B cell (primary cell): ENCODE measurements at regions of chr2 and their contacts with region 1.

Region 1: GRCh38 chr2:33599175-33599942 is at the start of gene FAM98A:
- DNase-seq: peak; percentile 99
- ATAC-seq: peak; percentile 94
- H3K4me3 ChIP-seq: peak within 1 kb of the TSS; percentile 78 to 99 (median 90)
- H3K4me3 Mint-ChIP-seq: peak within 1 kb of the TSS; percentile 97
- H3K27ac ChIP-seq: peak within 1 kb of the TSS; percentile 88 to 90
- H3K27ac Mint-ChIP-seq: peak within 1 kb of the TSS; percentile 94
- H3K4me1 ChIP-seq: peaks cover 16% of the 10 kb centered on the region in 2 donors
- H3K4me1 Mint-ChIP-seq: peaks cover 31% of the 10 kb centered on the region
- H3K27me3 ChIP-seq: no peaks in the 10 kb centered on the region
- H3K27me3 Mint-ChIP-seq: no peaks in the 10 kb centered on the region
- CTCF ChIP-seq: no peak
- total RNA-seq, gene FAM98A: 29.4 and 32.1 TPM in 2 replicates

Region 2: DNA sequence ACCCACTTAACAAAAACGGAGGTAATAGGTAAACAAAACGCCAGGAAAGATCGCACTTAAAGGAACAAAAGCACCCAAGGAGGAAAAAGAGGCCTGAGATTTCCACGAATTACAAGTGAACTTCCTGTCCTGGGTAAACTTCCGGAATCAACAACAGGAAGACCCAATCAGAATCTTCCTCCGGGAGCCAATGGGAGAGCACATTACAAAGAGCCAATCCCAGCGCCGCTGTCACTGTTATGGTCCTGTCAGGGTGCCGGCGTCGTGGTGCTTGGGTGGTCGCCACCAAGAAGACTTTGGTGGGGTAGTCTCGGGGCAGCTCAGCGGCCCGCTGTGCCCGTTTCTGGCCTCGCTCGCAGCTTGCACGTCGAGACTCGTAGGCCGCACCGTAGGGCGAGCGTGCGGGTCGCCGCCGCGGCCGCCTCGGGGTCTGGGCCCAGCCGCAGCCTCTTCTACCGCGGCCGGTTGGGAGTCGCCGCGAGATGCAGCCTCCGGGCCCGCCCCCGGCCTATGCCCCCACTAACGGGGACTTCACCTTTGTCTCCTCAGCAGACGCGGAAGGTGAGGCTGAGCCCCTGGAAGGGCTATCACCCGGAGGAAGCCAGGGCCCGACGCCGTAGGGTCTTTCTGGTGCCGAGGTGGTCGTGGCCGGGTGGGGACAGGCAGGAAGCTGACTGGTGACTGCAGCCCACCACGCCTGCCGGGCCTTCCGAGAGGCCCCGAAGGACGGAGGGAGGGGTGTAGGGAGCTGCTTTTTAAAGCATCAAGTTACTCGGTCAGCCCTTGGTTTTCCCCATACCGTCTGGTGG is 1321.5 kb before region 1 on chr2 and contains the start of gene YIPF4:
- CTCF ChIA-PET with region 1: no interaction called
- POLR2A ChIA-PET with region 1: no interaction called
- intact Hi-C with region 1: loop called (anchors 10 kb)
- DNase-seq: peak; percentile 96
- ATAC-seq: peak; percentile 98
- H3K4me3 ChIP-seq: peak within 1 kb of the TSS; percentile 70 to 98 (median 94)
- H3K4me3 Mint-ChIP-seq: peak within 1 kb of the TSS; percentile 91
- H3K27ac ChIP-seq: peak within 1 kb of the TSS; percentile 66 to 95
- H3K27ac Mint-ChIP-seq: peak within 1 kb of the TSS; percentile 97
- H3K4me1 ChIP-seq: peaks cover 12 to 20% of the 10 kb centered on the region in 2 donors
- H3K4me1 Mint-ChIP-seq: peaks cover 23% of the 10 kb centered on the region
- H3K27me3 ChIP-seq: no peaks in the 10 kb centered on the region
- H3K27me3 Mint-ChIP-seq: peaks cover 12% of the 10 kb centered on the region
- CTCF ChIP-seq: no peak
- total RNA-seq, gene YIPF4: 38.0 and 42.4 TPM in 2 replicates

Region 3: DNA sequence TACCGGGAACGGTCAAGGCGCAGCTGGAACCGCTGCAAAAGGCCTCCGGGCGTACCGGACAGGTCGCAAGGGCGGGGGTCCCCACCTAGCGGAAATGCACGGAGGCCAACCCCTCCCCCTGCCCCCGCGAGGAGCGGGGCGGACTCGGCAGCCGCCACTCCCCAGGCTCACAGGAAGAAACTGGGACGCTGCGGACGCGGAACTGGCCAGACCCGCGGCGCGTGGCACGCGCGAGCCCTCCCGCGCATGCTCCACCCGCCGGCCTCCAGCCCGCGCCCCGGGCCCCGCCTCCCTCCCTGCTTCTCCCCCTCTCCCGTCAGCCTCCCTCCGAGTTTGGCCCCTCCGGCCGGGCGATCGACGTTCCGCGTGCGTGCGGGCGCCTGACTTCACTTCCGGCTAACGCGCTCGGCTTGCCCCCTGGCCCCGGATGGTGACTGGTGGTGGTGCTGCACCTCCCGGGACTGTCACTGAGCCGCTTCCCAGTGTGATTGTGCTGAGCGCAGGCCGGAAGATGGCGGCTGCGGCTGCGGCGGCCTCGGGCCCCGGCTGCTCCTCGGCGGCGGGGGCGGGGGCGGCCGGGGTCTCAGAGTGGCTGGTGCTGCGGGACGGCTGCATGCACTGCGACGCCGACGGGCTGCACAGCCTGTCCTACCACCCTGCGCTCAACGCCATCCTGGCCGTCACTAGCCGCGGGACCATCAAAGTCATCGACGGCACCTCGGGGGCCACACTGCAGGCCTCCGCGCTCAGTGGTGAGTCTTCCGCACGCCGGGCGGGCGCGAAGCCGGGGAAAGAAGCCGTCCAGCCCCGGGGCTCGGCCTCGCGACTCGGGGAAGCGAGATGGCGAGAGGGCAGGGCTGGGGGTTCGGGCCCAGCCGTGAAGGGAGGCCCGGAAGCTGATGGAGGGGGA is 1242.4 kb before region 1 on chr2 and contains the start of gene BIRC6:
- CTCF ChIA-PET with region 1: no interaction called
- POLR2A ChIA-PET with region 1: no interaction called
- intact Hi-C with region 1: loop called (anchors 2 kb)
- DNase-seq: peak; percentile 97
- ATAC-seq: peak; percentile 86
- H3K4me3 ChIP-seq: peak within 1 kb of the TSS; percentile 63 to 98 (median 97)
- H3K4me3 Mint-ChIP-seq: peak within 1 kb of the TSS; percentile 91
- H3K27ac ChIP-seq: peak within 1 kb of the TSS; percentile 91 to 92
- H3K27ac Mint-ChIP-seq: peak within 1 kb of the TSS; percentile 98
- H3K4me1 ChIP-seq: peaks cover 34 to 36% of the 10 kb centered on the region in 2 donors
- H3K4me1 Mint-ChIP-seq: peaks cover 40% of the 10 kb centered on the region
- H3K27me3 ChIP-seq: no peaks in the 10 kb centered on the region
- H3K27me3 Mint-ChIP-seq: no peaks in the 10 kb centered on the region
- CTCF ChIP-seq: no peak
- total RNA-seq, gene BIRC6: 166 and 196 TPM in 2 replicates

Region 4: GRCh38 chr2:32627814-32628579 is 971.4 kb before region 1 on chr2 and contains the start of gene TTC27:
- CTCF ChIA-PET with region 1: no interaction called
- POLR2A ChIA-PET with region 1: no interaction called
- intact Hi-C with region 1: loop called (anchors 1 kb)
- DNase-seq: peak; percentile 94
- ATAC-seq: peak; percentile 100
- H3K4me3 ChIP-seq: peak within 1 kb of the TSS; percentile 75 to 97 (median 80)
- H3K4me3 Mint-ChIP-seq: peak within 1 kb of the TSS; percentile 96
- H3K27ac ChIP-seq: peak within 1 kb of the TSS; percentile 39 to 66
- H3K27ac Mint-ChIP-seq: peak within 1 kb of the TSS; percentile 82
- H3K4me1 ChIP-seq: peaks cover 4 to 17% of the 10 kb centered on the region in 2 donors
- H3K4me1 Mint-ChIP-seq: peaks cover 18% of the 10 kb centered on the region
- H3K27me3 ChIP-seq: no peaks in the 10 kb centered on the region
- H3K27me3 Mint-ChIP-seq: no peaks in the 10 kb centered on the region
- CTCF ChIP-seq: no peak
- total RNA-seq, gene TTC27: 25.8 and 28.5 TPM in 2 replicates

Region 5: DNA sequence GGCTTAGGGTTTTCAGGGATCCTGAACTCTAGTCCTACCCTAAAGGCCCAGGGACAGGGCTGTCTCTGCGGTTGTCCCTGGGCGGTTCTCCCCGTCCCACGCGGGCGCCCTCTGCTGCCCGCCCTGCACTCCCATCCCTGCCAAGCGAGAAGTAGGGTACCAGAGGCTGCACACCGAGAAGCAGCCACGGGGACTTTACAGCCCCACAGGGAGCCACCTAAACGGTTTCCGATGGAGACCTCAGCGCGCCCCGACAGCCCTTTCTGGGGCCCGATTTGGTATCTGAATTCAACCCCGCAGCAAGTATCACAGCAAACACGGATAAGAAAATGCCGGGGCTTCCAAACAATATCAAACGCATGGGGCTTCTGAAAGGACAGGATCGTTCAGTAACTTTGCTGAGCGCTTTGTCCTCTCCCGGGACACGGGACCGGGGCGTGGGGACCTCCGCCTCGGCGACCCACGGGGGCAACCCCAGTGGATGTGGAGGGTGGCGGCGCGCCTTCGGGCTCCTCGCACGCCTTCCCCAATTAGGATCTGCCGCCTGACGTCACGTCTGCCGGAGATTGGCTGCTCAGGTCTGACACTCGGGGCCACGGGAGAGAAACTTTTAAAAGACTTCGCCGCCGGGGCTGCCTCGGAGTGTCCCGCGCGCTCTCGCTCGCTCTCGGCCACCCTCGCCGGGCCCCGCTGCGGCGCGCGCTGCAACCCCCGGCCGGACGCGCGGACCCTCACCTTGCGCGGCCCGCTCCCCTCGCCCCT is 652.9 kb before region 1 on chr2 and contains the start of gene LTBP1:
- CTCF ChIA-PET with region 1: no interaction called
- POLR2A ChIA-PET with region 1: no interaction called
- intact Hi-C with region 1: loop called (anchors 5 kb)
- DNase-seq: peak; percentile 68
- ATAC-seq: peak; percentile 75
- H3K4me3 ChIP-seq: peak within 1 kb of the TSS; percentile 42 to 72 (median 62)
- H3K4me3 Mint-ChIP-seq: peak within 1 kb of the TSS; percentile 86
- H3K27ac ChIP-seq: no peak within 1 kb of the TSS
- H3K27ac Mint-ChIP-seq: peak within 1 kb of the TSS; percentile 4
- H3K4me1 ChIP-seq: peaks cover 7 to 12% of the 10 kb centered on the region in 2 donors
- H3K4me1 Mint-ChIP-seq: peaks cover 15% of the 10 kb centered on the region
- H3K27me3 ChIP-seq: peaks cover 0 to 21% (median 13%) of the 10 kb centered on the region in 4 experiments
- H3K27me3 Mint-ChIP-seq: peaks cover 27% of the 10 kb centered on the region
- CTCF ChIP-seq: peak; percentile 67
- total RNA-seq, gene LTBP1: 0.17 and 0.69 TPM in 2 replicates

Region 6: GRCh38 chr2:33529771-33530351 is 69.5 kb before region 1 on chr2:
- CTCF ChIA-PET with region 1: interaction called, 3 read pairs
- POLR2A ChIA-PET with region 1: interaction called, 5 read pairs
- intact Hi-C with region 1: loop called (anchors 5 kb)
- DNase-seq: peak; percentile 36
- ATAC-seq: peak; percentile 37
- H3K4me3 ChIP-seq: peak overlapping the region in 1 of 5 experiments; percentile 56
- H3K4me3 Mint-ChIP-seq: peak overlapping the region; percentile 72
- H3K27ac ChIP-seq: peak overlapping the region; percentile 98 to 99
- H3K27ac Mint-ChIP-seq: peak overlapping the region; percentile 95
- H3K4me1 ChIP-seq: peaks cover 72 to 77% of the 10 kb centered on the region in 2 donors
- H3K4me1 Mint-ChIP-seq: peaks cover 79% of the 10 kb centered on the region
- H3K27me3 ChIP-seq: no peaks in the 10 kb centered on the region
- H3K27me3 Mint-ChIP-seq: no peaks in the 10 kb centered on the region
- CTCF ChIP-seq: no peak